Activated naive CD4-positive, alpha-beta T cell treated with anti-CD3 and anti-CD28 coated beads, Interleukin-2, amount 10 ng/mL, durations not matched to agents 7 days and 5 days (primary cell): ENCODE measurements at regions of chr18 and their contacts with region 1.

Region 1: GRCh38 chr18:21600526-21601410 is at the start of gene ESCO1:
- DNase-seq: peak; percentile 96
- H3K4me3 Mint-ChIP-seq: peak within 1 kb of the TSS; percentile 88
- H3K27ac Mint-ChIP-seq: peak within 1 kb of the TSS; percentile 100
- H3K4me1 Mint-ChIP-seq: peaks cover 37% of the 10 kb centered on the region
- H3K27me3 Mint-ChIP-seq: peaks cover 9% of the 10 kb centered on the region

Region 2: GRCh38 chr18:21612125-21612991 is 11.6 kb after region 1 on chr18 and contains the start of gene SNRPD1:
- CTCF ChIA-PET with region 1: interaction called, 63 read pairs
- DNase-seq: peak; percentile 89
- H3K4me3 Mint-ChIP-seq: peak within 1 kb of the TSS; percentile 100
- H3K27ac Mint-ChIP-seq: peak within 1 kb of the TSS; percentile 99
- H3K4me1 Mint-ChIP-seq: peaks cover 50% of the 10 kb centered on the region
- H3K27me3 Mint-ChIP-seq: no peaks in the 10 kb centered on the region